AG04449 (cell line): ENCODE measurements at regions of chr9 and their contacts with region 1.

Region 1: DNA sequence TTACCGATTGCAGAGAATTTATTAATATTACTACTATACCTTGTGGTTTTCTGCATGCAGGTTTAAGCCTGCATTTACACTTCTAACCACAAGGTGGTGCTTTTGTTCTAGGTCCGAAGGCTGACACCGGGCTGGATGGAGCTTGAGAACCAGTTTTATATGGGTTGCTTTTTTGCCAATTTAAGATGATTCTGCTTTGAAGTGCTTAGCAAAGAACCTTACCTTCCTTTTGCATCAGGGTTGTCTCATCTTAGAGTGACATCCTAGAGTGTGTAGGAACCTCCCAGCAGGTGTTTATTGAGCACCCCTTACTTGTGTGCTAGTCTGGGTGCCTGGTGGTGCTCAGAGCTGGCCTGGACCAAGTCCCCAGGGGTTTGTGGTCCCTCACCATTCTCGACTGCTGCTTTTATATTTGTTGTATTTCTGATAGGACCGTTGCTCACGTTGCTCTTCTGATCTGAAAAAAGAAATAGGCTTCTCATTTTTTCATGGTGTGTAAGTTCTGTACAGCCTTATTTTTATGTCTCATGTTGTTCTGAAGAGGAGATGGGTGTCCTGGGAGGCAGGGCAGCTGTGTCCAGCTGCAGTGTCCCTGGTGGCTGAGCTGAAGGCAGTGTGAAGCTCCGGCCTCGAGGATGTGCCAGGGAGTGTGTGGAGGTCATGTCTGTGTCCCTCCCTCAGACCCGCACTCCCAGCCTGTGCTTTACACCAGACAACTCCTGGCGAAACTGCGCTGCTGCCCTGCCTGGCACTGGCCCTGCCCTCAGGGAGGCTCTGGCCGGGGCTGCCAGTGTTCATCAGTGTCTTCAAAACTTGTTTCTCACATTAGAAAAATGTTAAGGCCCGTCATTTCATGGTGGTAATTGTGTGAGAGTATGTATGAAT is 54.3 kb downstream of the EHMT1 start:
- DNase-seq: peak; percentile 23
- H3K4me3 ChIP-seq: no peak overlapping the region
- CTCF ChIP-seq: peak; percentile 70

Region 2: GRCh38 chr9:137482094-137482781 is 190.9 kb before region 1 on chr9:
- CTCF ChIA-PET with region 1: no interaction called
- POLR2A ChIA-PET with region 1: no interaction called
- DNase-seq: no peak
- H3K4me3 ChIP-seq: no peak overlapping the region
- CTCF ChIP-seq: no peak

Region 3: GRCh38 chr9:137586854-137587253 is 86.3 kb before region 1 on chr9:
- CTCF ChIA-PET with region 1: no interaction called
- POLR2A ChIA-PET with region 1: no interaction called
- DNase-seq: no peak
- H3K4me3 ChIP-seq: no peak overlapping the region
- CTCF ChIP-seq: no peak

Region 4: GRCh38 chr9:137689745-137690529 is 16.8 kb after region 1 on chr9:
- CTCF ChIA-PET with region 1: interaction called, 18 read pairs
- POLR2A ChIA-PET with region 1: no interaction called
- DNase-seq: no peak
- H3K4me3 ChIP-seq: no peak overlapping the region
- CTCF ChIP-seq: no peak

Region 5: GRCh38 chr9:137694967-137695879 is 22.1 kb after region 1 on chr9:
- CTCF ChIA-PET with region 1: interaction called, 18 read pairs
- POLR2A ChIA-PET with region 1: no interaction called
- DNase-seq: no peak
- H3K4me3 ChIP-seq: no peak overlapping the region
- CTCF ChIP-seq: peak; percentile 66

Region 6: DNA sequence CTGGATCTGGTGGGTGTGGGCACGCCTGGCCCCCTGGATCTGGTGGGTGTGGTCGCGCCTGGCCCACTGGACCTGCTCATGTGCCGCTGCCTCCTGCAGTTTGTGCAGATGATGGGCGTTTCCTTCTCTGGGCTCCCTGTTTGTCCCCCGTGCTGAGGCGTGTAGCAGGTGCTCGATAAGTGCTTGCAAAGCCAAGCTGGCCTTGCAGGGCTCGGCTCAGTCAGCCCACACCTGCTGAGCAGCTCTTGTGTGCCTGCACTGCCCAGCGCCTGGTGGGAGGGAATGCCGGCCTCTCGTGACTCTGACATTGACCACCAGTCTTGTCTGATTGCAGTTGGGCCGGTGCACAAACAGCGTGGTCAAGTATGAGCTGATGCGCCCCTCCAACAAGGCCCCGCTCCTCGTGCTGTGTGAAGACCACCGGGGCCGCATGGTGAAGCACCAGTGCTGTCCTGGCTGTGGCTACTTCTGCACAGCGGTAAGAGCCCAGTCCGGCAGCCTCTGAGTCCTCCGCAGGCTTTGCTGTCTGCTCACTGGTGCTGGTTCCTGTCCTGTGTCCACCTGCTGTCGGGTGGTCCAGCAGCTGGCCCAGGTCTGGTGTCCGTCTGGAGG is 101.7 kb after region 1 on chr9:
- CTCF ChIA-PET with region 1: interaction called, 16 read pairs
- POLR2A ChIA-PET with region 1: no interaction called
- DNase-seq: no peak
- H3K4me3 ChIP-seq: no peak overlapping the region
- CTCF ChIP-seq: no peak

Region 7: DNA sequence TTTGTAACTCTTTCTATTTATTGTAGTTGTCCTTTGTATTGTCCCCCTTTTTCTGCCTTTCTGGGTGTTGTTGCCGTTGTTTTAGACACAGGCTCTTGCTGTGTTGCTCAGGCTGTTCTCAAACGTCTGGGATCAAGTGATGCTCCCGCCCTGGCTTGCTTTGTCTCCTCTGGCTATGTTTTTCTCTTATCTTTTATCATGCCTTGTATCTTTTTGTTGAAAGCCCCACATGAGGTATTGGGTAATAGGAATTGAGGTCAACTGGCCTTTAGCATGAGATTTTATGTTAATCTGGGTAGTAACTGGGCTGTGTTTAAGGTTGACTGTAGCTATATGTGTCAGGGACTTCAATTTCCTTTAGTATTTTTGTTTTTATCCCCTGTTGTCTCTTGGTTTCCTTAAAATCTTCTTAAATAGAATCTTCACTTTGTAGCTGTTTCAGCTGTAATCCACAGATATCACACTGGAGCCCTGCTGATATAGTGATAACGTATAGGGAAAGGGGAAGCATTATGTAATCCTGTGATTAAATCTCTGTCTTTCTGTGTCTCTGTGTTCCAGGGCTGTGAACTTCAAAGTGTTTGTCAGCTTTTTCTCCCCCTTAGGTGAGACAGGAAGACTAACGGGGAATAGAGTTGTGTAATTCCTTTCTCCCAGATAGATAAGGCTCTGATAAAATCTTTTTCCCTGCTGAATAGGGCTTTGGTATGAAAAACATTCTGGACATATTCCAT is 178.5 kb after region 1 on chr9:
- CTCF ChIA-PET with region 1: no interaction called
- POLR2A ChIA-PET with region 1: no interaction called
- DNase-seq: no peak
- H3K4me3 ChIP-seq: no peak overlapping the region
- CTCF ChIP-seq: no peak